ENCODE measurements at regions of chr14 and their contacts with region 1.

Region 1: GRCh38 chr14:63388763-63389431 is 70.2 kb upstream of the GPHB5 start:
- DNase-seq: peak; percentile 15 to 63 (median 44)
- ATAC-seq: peak; percentile 75
- H3K4me3 ChIP-seq: no peak overlapping the region
- H3K4me3 Mint-ChIP-seq: no peak overlapping the region
- H3K27ac ChIP-seq: no peak overlapping the region
- H3K27ac Mint-ChIP-seq: no peak overlapping the region
- H3K4me1 ChIP-seq: no peaks in the 10 kb centered on the region
- H3K4me1 Mint-ChIP-seq: peaks cover 5% of the 10 kb centered on the region
- H3K27me3 ChIP-seq: no peaks in the 10 kb centered on the region
- H3K27me3 Mint-ChIP-seq: no peaks in the 10 kb centered on the region
- CTCF ChIP-seq: peak; percentile 57

Region 2: GRCh38 chr14:63418020-63418419 is 29.1 kb after region 1 on chr14:
- CTCF ChIA-PET with region 1: no interaction called
- POLR2A ChIA-PET with region 1: no interaction called
- intact Hi-C with region 1: loop called in 1 of 2 experiments (anchors 1 kb)
- DNase-seq: no peak
- ATAC-seq: no peak
- H3K4me3 ChIP-seq: no peak overlapping the region
- H3K4me3 Mint-ChIP-seq: no peak overlapping the region
- H3K27ac ChIP-seq: no peak overlapping the region
- H3K27ac Mint-ChIP-seq: no peak overlapping the region
- H3K4me1 ChIP-seq: no peaks in the 10 kb centered on the region
- H3K4me1 Mint-ChIP-seq: peaks cover 8% of the 10 kb centered on the region
- H3K27me3 ChIP-seq: no peaks in the 10 kb centered on the region
- H3K27me3 Mint-ChIP-seq: no peaks in the 10 kb centered on the region
- CTCF ChIP-seq: no peak

Region 3: GRCh38 chr14:64303471-64303917 is 914.6 kb after region 1 on chr14:
- CTCF ChIA-PET with region 1: no interaction called
- POLR2A ChIA-PET with region 1: no interaction called
- intact Hi-C with region 1: loop called (anchors 2 to 10 kb)
- DNase-seq: peak in 2 of 9 experiments; percentile 53 to 66
- ATAC-seq: peak; percentile 68
- H3K4me3 ChIP-seq: no peak overlapping the region
- H3K4me3 Mint-ChIP-seq: no peak overlapping the region
- H3K27ac ChIP-seq: no peak overlapping the region
- H3K27ac Mint-ChIP-seq: no peak overlapping the region
- H3K4me1 ChIP-seq: no peaks in the 10 kb centered on the region
- H3K4me1 Mint-ChIP-seq: no peaks in the 10 kb centered on the region
- H3K27me3 ChIP-seq: no peaks in the 10 kb centered on the region
- H3K27me3 Mint-ChIP-seq: peaks cover 4% of the 10 kb centered on the region
- CTCF ChIP-seq: peak; percentile 92

Measured in CD8-positive, alpha-beta T cell (primary cell).